GM13976 (cell line): ENCODE measurements at regions of chr17 and their contacts with region 1.

Region 1: GRCh38 chr17:1716076-1716995 is 6.2 kb upstream of the TLCD2 start:
- DNase-seq: peak; percentile 100
- CTCF ChIP-seq: no peak

Region 2: GRCh38 chr17:2041561-2042366 is 325.4 kb after region 1 on chr17 and contains the start of gene OVCA2:
- in situ Hi-C with region 1: loop called (anchors 25 kb)
- DNase-seq: peak; percentile 99
- CTCF ChIP-seq: peak; percentile 74